A673 (cell line): ENCODE measurements at regions of chr6 and their contacts with region 1.

Region 1: GRCh38 chr6:36615018-36615761 is 21.0 kb downstream of the SRSF3 start:
- DNase-seq: peak; percentile 75
- H3K4me3 ChIP-seq: no peak overlapping the region
- H3K27ac ChIP-seq: no peak overlapping the region
- H3K4me1 ChIP-seq: no peaks in the 10 kb centered on the region
- H3K27me3 ChIP-seq: no peaks in the 10 kb centered on the region
- CTCF ChIP-seq: peak; percentile 82

Region 2: DNA sequence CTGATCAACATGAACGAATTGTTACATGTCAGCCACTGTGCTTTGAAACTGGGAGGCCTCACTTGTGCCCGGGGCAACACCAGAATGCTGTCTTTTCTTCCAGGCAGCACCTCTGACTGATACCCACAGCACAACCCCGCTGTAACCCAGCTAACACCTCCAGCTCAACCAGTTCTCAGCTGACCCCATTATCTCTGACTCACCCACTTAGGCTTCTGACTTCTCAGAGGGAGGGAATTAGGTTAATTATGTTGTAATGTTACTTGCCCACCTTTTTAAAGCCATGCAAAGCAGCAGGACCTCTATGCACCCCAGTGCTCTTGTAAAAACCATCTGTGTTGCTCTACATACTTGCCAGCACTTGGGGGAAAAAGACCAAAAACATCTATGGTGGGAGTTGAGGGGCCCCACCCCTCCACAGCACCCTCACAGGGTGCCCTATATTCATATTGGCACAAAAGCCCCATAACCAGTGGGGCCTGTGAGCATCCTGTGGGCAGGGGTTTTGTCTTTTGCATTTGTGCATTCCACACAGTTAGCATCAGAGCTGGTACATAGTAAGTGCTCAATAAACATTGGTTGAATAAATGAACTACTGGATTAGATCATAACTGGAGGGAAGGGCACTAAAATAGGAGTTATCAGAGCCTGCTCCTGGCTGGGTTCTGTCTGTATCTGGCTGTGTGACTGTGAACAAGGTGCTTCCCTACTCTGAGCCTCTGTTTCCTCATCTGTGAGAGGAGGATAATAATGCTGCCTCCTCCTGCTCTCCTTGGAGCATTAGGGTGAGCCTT is 300.8 kb before region 1 on chr6:
- CTCF ChIA-PET with region 1: no interaction called
- POLR2A ChIA-PET with region 1: interaction called, 10 read pairs
- intact Hi-C with region 1: no loop called
- DNase-seq: no peak
- H3K4me3 ChIP-seq: no peak overlapping the region
- H3K27ac ChIP-seq: no peak overlapping the region
- H3K4me1 ChIP-seq: no peaks in the 10 kb centered on the region
- H3K27me3 ChIP-seq: no peaks in the 10 kb centered on the region
- CTCF ChIP-seq: no peak

Region 3: GRCh38 chr6:36701401-36701991 is 86.3 kb after region 1 on chr6:
- CTCF ChIA-PET with region 1: no interaction called
- POLR2A ChIA-PET with region 1: no interaction called
- intact Hi-C with region 1: no loop called
- DNase-seq: no peak
- H3K4me3 ChIP-seq: no peak overlapping the region
- H3K27ac ChIP-seq: no peak overlapping the region
- H3K4me1 ChIP-seq: no peaks in the 10 kb centered on the region
- H3K27me3 ChIP-seq: no peaks in the 10 kb centered on the region
- CTCF ChIP-seq: no peak